AG04450 (cell line): ENCODE measurements at regions of chr6 and their contacts with region 1.

Region 1: GRCh38 chr6:28355743-28356665 is 6.3 kb downstream of the ZKSCAN3 start:
- DNase-seq: peak; percentile 82
- H3K4me3 ChIP-seq: peak overlapping the region; percentile 73
- H3K27ac ChIP-seq: peak overlapping the region; percentile 83
- H3K27me3 ChIP-seq: no peaks in the 10 kb centered on the region
- CTCF ChIP-seq: peak; percentile 76

Region 2: DNA sequence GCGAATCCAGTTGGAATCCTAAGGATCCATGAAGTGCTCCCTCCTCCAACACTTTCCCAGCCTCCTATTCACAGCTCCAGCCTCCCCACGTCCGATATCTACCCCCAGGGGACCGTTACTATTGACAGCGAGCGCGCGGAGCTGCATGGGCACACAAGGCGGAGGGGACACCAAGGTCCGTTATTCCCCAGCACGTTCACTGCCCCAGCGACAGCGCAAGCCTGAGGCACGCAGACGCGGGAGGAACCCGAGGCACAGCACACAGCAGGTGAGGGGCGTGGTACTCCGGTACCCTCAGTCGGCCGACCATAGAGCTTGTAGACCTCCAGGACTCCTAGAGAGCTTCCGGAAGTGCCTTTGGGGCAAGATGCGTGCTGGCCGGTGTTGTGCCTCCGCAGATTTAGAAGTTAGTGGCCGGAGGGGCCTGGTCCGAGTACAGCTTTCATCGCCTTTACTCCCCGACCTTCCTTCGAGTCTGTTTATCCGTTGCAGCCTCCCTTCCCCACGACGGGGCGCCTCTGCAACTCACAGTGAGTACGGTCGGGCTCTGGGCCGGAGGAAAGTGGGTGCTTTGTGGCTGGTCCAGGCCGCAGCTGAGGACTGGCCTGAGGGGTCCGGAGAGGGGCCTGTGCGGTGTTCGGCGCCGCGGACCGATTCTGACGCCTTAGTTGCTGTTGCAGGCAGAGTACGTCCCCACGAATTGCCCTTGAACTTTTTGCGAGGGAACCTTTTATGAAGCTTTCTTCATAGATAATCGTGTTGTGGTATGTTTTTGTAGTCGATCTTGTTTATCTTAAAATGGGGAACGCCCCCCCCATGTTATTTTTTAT is 214.3 kb before region 1 on chr6 and contains the start of gene ZKSCAN8:
- CTCF ChIA-PET with region 1: interaction called, 34 read pairs
- POLR2A ChIA-PET with region 1: interaction called, 6 read pairs
- DNase-seq: peak; percentile 54
- H3K4me3 ChIP-seq: peak within 1 kb of the TSS; percentile 95
- H3K27ac ChIP-seq: peak within 1 kb of the TSS; percentile 90
- H3K27me3 ChIP-seq: no peaks in the 10 kb centered on the region
- CTCF ChIP-seq: no peak
- polyA plus RNA-seq, gene ZKSCAN8: 11.5 and 15.0 TPM in 2 replicates

Region 3: DNA sequence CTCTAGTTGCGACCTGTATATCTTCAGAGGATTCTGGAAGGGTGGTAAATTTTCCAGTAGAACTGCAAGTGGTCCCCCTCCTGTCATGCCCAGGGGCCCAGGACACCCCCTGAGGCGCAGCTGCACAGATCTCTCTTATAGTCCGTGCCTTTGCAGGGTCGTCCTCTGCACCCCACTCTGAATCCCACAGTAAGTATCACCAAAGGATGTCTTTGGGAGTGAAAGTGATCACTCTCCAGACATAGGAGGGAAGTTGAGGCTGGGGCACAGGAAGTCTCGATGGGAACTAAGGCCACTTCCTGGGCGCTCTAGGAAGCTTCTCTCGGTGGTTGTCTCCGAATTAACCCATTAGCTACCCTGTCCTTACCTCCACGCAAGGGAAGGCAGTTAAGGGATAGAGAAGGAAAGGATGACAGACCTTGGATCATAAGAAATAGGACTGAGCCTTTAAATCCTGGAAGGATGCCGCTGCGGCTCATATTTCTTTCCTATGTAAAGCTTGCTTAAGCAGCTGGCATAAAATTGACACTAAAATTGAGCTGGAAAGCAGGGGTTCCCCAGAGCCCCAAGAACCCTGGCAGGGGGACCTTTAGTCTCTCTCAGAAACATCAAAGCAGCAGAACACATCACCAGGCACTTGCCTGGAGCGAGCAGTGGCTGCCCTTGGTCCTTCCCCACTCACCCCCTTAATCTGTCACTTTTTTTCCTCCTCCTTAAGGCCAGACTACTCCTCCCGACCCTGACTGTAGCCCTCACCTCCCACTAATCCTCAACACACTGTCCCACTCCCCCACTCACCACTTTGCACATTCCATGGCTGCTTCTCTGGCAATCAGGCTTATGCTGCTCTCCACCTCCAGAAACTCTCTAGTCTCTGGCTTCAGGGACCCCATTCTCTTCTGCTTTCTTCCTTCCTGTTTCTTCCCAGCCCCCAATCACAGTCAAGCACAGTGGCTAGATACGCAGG is 103.7 kb before region 1 on chr6 and contains the start of gene ZKSCAN4:
- CTCF ChIA-PET with region 1: interaction called, 13 read pairs
- POLR2A ChIA-PET with region 1: interaction called, 9 read pairs
- DNase-seq: peak; percentile 86
- H3K4me3 ChIP-seq: peak within 1 kb of the TSS; percentile 94
- H3K27ac ChIP-seq: peak within 1 kb of the TSS; percentile 52
- H3K27me3 ChIP-seq: no peaks in the 10 kb centered on the region
- CTCF ChIP-seq: no peak
- polyA plus RNA-seq, gene ZKSCAN4: 3.7 and 4.7 TPM in 2 replicates

Region 4: GRCh38 chr6:28266962-28267694 is 88.9 kb before region 1 on chr6 and contains the start of gene ZSCAN26:
- CTCF ChIA-PET with region 1: interaction called, 28 read pairs
- POLR2A ChIA-PET with region 1: interaction called, 3 read pairs
- DNase-seq: peak; percentile 82
- H3K4me3 ChIP-seq: peak within 1 kb of the TSS; percentile 75
- H3K27ac ChIP-seq: peak within 1 kb of the TSS; percentile 88
- H3K27me3 ChIP-seq: no peaks in the 10 kb centered on the region
- CTCF ChIP-seq: no peak
- polyA plus RNA-seq, gene ZSCAN26: 17.9 and 24.0 TPM in 2 replicates

Region 5: DNA sequence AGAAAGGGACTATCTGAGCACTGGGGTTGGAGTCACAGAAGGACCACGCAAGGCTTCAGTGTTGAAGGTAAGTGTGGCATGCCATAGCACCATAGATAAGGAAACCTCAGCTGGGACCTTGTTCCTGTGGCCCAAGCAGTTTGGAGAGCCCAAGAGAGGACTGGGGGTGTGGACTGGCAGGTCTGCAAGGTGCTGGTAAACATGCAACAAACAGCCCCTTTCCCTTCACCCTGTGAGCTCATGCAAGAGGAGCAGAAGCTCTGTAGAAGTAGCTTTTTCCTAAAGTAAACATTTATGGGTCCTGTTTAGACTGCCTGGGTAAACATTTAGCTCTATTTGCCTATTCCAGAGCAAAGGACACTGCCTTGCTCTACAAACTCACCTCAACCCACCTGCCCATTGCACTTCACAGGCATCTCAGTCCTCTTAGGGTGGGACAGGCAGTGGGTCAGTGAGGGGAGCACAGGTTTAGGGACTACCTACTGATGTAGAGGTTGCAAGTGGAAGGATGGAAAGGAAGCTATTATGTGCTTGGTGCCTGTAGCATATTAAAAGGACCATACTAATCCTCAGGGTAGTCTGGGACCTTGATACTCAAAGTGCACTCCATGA is 32.1 kb before region 1 on chr6:
- CTCF ChIA-PET with region 1: no interaction called
- POLR2A ChIA-PET with region 1: no interaction called
- DNase-seq: no peak
- H3K4me3 ChIP-seq: no peak overlapping the region
- H3K27ac ChIP-seq: no peak overlapping the region
- H3K27me3 ChIP-seq: no peaks in the 10 kb centered on the region
- CTCF ChIP-seq: no peak

Region 6: DNA sequence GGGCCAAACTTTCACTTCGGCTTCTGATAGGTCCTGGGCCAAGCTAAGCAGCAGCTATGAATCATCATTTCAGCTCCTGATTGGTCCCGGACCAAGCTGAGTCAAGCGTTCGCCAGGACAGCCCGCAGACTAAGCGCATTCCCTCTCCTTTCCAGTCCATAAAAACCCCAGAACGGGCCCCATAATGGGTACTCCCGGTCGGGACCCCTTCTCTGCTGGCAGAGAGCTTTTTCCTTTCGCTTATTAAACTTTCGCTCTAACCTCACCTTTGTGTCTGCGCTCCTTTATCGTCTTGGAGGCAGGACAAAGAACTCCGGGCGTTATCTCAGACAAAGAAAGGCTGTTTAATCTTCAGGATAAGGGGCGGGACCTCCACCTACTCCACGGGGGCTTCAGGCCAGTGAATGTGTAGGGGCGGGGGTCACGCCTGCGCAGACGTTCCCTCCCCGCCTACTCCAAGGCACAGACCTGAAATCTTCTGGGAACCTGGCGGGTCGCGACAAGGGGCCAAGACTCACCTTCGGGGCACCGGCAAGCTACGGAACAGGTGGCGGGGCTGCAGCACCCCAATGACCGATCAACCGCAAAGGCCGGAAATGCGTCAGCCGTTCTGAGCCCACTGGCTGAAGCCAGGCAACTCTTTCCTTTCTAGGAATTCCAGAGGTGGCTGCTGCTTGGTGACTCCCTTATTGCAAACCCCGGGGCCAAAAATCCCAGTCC is 20.3 kb before region 1 on chr6 and contains the start of gene ZSCAN31:
- CTCF ChIA-PET with region 1: interaction called, 11 read pairs
- POLR2A ChIA-PET with region 1: interaction called, 14 read pairs
- DNase-seq: peak; percentile 98
- H3K4me3 ChIP-seq: peak within 1 kb of the TSS; percentile 83
- H3K27ac ChIP-seq: peak within 1 kb of the TSS; percentile 100
- H3K27me3 ChIP-seq: peaks cover 2% of the 10 kb centered on the region
- CTCF ChIP-seq: no peak
- polyA plus RNA-seq, gene ZSCAN31: 5.0 TPM in 2 replicates

Region 7: DNA sequence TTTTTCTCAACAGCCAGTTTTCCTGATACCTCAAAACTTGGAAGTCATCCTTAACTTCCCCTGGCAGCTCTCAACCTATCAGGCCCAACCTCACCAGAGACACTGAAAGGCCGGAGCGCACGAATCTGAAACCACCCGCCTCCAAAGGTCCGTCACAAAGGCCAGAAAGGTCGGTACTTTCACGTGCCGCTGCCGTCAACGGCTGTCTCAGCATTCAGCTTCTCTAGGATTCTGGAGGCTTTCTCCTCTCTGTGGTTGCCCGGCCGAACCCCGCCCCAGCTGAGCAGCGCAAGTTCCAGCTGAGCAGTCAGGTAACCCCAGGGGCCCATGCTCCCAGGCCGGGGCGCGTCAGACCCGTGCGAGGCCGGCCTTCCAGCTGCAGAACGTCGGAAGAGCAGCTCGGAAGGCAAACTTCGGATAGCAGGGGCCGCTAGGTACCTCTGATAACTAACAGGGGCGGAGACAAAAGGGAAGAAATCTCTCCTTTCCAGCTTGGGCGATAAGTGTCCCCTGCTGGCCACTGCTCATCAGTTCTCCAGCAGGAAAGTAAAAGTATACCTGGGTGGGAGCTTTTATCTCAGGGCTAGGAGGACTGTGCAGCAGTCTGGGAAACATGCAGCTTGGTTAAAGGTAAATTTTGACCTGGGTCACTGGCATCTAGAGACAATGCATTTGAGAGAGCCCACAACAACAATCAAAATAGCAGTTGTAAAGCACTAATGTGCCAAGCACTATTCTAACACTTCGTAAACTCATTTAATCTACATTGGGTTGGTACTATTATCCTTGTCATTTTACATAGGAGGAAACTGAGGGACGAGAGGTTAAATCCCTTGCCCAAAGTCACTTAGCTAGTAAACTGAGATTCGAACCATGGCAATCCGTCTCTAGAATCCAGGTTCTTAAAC is 27.5 kb after region 1 on chr6:
- CTCF ChIA-PET with region 1: interaction called, 26 read pairs
- POLR2A ChIA-PET with region 1: interaction called, 3 read pairs
- DNase-seq: peak; percentile 65
- H3K4me3 ChIP-seq: peak overlapping the region; percentile 57
- H3K27ac ChIP-seq: peak overlapping the region; percentile 66
- H3K27me3 ChIP-seq: no peaks in the 10 kb centered on the region
- CTCF ChIP-seq: peak; percentile 63